Right ventricle myocardium superior (tissue), 1 donor: ENCODE measurements at regions of chr2 and their contacts with region 1.

Region 1: GRCh38 chr2:238784671-238785527 is 63.0 kb upstream of the TWIST2 start:
- DNase-seq: peak; percentile 80
- ATAC-seq: peak; percentile 94

Region 2: GRCh38 chr2:238513346-238513745 is 271.6 kb before region 1 on chr2:
- intact Hi-C with region 1: loop called (anchors 5 kb)
- DNase-seq: no peak
- ATAC-seq: peak; percentile 74

Region 3: DNA sequence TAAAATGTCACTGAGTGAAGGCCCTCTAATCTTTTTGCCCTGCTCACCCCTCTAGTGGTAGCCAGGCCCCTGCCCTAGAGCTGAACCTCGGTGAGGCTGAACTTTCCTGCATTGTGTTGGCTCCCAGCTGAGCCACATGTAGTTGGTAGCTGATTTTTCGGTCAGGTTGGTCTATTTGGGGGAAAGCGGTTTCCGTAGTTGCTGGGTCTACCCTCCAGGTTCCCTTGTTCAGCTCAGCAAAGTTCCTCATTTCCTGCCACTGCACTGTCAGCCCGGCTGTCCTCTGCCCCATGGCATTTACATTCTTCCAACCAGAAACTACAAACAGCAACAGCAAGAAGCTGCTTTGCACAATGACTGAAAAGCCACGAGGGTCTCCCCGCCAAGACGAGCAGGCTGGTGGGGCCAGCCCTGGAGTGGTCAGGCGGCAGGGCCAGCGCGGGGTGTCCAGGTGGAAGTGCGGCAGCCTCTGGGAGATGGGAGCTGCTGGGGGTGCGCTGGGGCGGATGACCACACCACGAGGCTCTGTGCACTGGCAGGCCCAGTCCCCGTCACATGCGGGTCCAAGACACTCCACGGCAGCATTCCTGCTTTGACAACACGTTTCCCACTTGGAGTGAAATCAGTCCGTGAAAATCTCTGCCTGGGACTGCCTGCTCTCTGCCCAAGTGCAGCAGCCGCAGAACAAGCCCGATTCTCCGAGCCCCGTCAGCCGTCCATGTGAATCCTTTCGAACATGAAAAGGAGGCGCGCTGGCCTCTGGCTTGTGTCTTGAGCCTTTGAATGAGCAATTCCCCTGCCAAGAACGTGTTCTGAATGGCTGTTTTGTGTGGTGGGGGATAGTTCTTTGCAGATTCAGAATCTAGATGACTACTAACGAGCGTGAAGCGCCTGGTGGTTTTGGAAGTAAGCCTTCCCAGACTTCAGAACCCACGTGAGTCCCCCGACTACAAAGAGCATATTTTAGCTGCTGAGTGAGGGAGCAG is 198.8 kb before region 1 on chr2:
- intact Hi-C with region 1: no loop called
- DNase-seq: no peak
- ATAC-seq: no peak

Region 4: DNA sequence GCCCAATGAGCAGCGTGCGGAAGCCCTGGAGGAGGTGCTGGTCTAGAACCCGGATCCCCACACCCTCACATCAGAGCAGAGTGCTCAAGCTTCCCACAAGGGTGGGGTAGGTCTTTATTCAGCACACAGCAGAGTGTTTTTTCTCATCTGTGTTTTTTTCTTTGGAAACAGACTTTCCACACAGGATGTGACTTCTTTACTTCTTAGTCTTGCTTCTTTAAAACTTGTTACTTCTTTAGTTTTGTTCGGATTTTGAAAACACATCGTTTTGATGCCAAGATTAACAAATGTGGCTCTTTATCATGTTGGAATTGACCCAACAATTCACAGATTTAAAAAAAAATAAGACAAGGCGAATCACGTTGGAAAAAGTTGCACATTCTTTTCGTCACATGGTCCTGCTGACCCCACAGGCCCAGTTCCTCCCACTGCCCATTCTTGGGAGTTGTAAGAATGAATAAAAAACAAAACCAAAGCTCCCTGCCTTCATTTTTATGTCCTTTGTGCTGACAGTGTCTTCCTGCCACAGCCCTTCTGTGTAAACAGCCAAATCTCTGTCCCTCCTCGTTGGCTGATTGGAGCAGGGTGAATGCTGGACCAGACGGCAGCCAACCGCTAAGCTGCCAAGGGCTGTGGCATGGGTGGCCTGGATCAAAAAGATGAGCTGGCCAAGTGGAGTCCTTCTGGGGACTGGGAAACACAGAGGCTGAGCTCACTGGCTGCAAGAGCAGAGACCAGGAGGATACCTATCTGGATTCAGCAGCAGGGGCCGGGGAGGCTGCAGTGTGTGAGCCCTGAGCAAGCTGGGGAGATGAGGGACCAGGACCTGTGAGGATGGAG is 144.6 kb after region 1 on chr2:
- intact Hi-C with region 1: no loop called
- DNase-seq: peak; percentile 74
- ATAC-seq: peak; percentile 84

Region 5: DNA sequence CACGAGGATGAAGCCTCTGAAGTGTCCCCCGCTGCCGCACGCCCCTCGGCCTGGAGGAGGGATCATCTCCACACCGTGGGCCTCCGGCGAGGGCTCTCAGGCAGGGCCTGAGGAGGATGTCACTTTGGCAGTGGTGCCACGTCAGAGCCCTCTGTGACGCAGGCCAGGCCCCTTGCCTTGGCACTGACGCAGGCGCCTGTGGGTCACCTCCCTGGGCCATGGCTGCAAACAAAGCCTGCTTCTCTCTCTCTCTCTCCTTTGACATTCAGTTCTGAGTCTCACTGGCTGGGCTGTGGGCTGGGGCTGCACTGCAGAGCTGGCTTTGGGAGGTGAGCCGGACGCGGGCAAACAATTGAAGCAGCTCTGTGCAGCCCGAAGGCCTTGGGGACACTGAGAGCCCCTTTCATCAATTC is 336.7 kb after region 1 on chr2:
- intact Hi-C with region 1: no loop called
- DNase-seq: no peak
- ATAC-seq: peak; percentile 30